ENCODE measurements at regions of chrX and their contacts with region 1.

Region 1: GRCh38 chrX:71563921-71564320 is 14.3 kb upstream of the GCNA start:
- DNase-seq: no peak
- H3K4me3 ChIP-seq: no peak overlapping the region
- H3K4me1 ChIP-seq: no peaks in the 10 kb centered on the region
- H3K27me3 ChIP-seq: no peaks in the 10 kb centered on the region

Region 2: GRCh38 chrX:71393919-71394318 is 170.0 kb before region 1 on chrX:
- in situ Hi-C with region 1: loop called (anchors 5 kb)
- DNase-seq: no peak
- H3K4me3 ChIP-seq: no peak overlapping the region
- H3K4me1 ChIP-seq: no peaks in the 10 kb centered on the region
- H3K27me3 ChIP-seq: no peaks in the 10 kb centered on the region

Region 3: DNA sequence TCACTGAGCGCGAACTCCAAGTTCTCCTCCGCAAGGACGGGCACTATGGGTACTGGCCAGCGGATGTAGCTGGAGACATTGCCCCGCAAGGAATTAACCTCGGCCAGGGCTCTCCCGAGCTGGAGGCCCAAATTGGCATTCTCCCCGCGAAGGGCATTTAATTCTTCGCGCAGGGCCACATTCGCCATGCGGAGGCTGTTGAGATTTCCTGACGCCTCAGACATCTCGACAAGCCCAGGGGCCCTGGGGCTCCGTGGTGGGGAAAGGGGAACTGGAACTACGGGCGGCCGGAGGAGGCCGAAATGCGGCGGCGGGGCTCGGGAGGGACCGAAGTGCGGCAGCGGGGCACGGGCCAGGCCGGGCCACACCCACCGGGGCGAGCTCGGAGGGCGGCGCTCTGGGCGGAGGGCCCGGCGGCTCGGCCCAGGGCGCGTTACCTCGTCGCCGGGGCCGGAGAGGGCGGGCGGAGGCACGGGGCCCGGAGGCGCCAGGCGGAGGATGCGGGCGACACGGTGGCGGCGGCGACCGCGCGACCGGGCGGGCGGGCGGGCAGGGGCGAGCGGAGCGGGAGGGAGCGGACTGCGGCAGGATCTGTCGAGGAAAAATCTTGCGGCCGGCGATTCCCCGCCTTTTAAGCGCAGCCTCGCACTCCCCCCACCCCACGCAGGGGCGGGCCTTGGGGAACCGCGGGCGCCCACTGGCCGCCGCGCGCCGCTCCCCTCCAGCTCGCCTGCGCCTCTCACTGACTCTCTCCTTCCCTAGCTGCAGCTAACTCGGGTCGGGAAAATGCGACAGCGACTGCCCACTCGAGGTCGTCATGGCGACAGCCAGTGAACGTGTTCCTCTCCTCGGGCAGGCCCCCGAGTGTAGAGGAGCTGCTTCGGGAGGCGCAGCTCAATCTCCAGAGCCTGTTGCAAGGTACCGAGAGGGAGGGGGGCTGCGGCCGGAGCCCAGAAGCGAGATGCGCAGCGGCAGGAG is 567.7 kb after region 1 on chrX and contains the start of gene RTL5:
- in situ Hi-C with region 1: no loop called
- DNase-seq: peak; percentile 87 to 92
- H3K4me3 ChIP-seq: peak within 1 kb of the TSS; percentile 24
- H3K4me1 ChIP-seq: peaks cover 2% of the 10 kb centered on the region
- H3K27me3 ChIP-seq: no peaks in the 10 kb centered on the region